ENCODE measurements at regions of chr10 and their contacts with region 1.

Region 1: GRCh38 chr10:12107781-12108180 is 21.7 kb upstream of the SEC61A2 start:
- DNase-seq: no peak
- ATAC-seq: no peak
- H3K4me3 ChIP-seq: no peak overlapping the region
- H3K4me3 Mint-ChIP-seq: no peak overlapping the region
- H3K27ac ChIP-seq: no peak overlapping the region
- H3K27ac Mint-ChIP-seq: no peak overlapping the region
- H3K4me1 ChIP-seq: peaks cover 0 to 5% of the 10 kb centered on the region in 2 experiments
- H3K4me1 Mint-ChIP-seq: peaks cover 10 to 13% (median 12%) of the 10 kb centered on the region in 3 donors
- H3K27me3 ChIP-seq: no peaks in the 10 kb centered on the region
- H3K27me3 Mint-ChIP-seq: no peaks in the 10 kb centered on the region

Region 2: GRCh38 chr10:12834116-12834515 is 726.3 kb after region 1 on chr10:
- CTCF ChIA-PET with region 1: no interaction called
- POLR2A ChIA-PET with region 1: interaction called in 1 of 2 experiments, 11 read pairs
- DNase-seq: no peak
- ATAC-seq: no peak
- H3K4me3 ChIP-seq: no peak overlapping the region
- H3K4me3 Mint-ChIP-seq: no peak overlapping the region
- H3K27ac ChIP-seq: no peak overlapping the region
- H3K27ac Mint-ChIP-seq: no peak overlapping the region
- H3K4me1 ChIP-seq: no peaks in the 10 kb centered on the region
- H3K4me1 Mint-ChIP-seq: no peaks in the 10 kb centered on the region
- H3K27me3 ChIP-seq: no peaks in the 10 kb centered on the region
- H3K27me3 Mint-ChIP-seq: no peaks in the 10 kb centered on the region

Measured in T-cell (primary cell).